ENCODE measurements at regions of chr2 and their contacts with region 1.

Region 1: DNA sequence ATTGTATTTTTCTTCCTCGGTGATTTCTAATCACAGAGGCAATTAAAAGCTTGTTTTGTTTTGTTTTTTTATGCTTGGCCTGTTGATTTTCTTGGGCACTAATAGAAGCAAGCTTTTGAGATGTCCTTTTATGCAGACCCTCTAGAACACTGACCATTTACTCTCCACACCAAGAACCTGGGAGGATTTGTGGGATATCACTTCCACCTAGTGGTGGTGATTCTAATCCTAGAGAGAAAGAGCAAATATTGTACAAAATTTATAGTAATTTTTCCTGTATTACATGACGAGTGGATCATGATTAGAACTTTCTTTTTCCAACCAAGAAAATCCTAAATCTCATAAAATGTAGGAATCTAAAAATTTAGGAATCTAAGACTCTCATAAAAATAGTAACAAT is 23.4 kb downstream of the NEMP2 start:
- DNase-seq: no peak
- H3K4me3 ChIP-seq: no peak overlapping the region
- H3K27ac ChIP-seq: peak overlapping the region in 35 of 59 donors; percentile 2 to 81 (median 53)
- H3K27me3 ChIP-seq: no peaks in the 10 kb centered on the region
- CTCF ChIP-seq: peak; percentile 45 to 90 (median 70)

Region 2: GRCh38 chr2:190343500-190344275 is 167.4 kb before region 1 on chr2 and contains the start of gene INPP1:
- intact Hi-C with region 1: loop called (anchors 2 to 5 kb)
- DNase-seq: peak in 9 of 10 donors; percentile 31 to 79 (median 55)
- H3K4me3 ChIP-seq: peak within 1 kb of the TSS; percentile 66 to 94 (median 81)
- H3K27ac ChIP-seq: peak within 1 kb of the TSS; percentile 65 to 98 (median 95)
- H3K27me3 ChIP-seq: no peaks in the 10 kb centered on the region
- CTCF ChIP-seq: no peak
- total RNA-seq, gene INPP1: 32.3 to 82.1 (median 48.4) TPM